ENCODE measurements at regions of chr5 and their contacts with region 1.

Region 1: DNA sequence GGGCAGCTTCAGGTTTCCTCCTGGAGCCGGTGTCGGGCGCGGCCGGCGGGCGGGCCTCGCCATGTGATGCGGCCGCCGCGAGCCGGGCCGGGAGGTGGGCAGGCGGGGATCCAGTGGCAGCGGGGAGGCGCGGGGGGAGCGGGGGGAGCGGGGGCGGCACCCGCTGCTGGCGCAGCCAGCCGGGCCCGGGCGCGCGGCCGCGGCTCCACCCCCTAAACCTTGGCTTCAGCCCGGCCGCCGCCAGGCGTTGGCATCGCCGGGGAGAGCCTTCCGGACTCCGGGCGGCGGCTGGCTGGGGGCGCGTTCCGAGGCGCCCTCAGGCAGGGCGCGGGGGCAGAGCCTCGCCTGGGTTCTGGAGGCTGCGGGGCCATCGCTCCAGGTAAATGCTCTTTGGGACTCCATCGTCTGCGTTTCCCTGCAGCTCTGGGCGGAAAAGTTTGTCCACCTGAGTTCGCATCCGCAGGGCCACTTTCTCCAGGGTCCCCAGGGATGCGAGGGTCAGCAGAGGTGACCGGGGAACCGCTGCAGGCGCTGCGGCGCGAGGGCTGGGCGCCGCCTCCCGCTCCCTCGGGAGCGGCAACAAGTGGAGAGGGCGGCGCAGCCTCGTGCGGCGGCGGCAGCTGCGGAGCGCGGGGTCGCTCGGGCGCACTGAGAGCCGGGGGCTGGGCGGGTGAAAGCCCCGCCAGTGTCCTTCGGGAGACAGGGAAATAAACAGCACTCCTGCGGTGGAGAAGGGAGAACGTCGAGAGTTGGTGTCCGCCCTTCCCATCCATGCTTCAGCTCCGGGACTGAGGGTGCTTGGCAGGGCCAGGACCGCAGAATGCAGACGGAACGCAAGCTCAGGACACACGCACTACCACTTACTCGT is at the start of gene ARHGEF28:
- DNase-seq: peak; percentile 49
- ATAC-seq: peak; percentile 78
- H3K4me3 ChIP-seq: peak within 1 kb of the TSS; percentile 79 to 90 (median 80)
- H3K27ac ChIP-seq: peak within 1 kb of the TSS; percentile 81
- H3K4me1 ChIP-seq: peaks cover 77% of the 10 kb centered on the region
- H3K27me3 ChIP-seq: no peaks in the 10 kb centered on the region; a peak in 1 of 5 replicates
- CTCF ChIP-seq: peak; percentile 23; the same call in 1 of the 2 replicates
- EP300 ChIP-seq: no peak
- POLR2A ChIP-seq: peak; percentile 54 to 75; a peak in 3 of 4 replicates
- RAD21 ChIP-seq: 0 out of 2 replicates have a peak, but pooled peaks have one; percentile 49
- total RNA-seq, gene ARHGEF28: 34.1 and 36.7 TPM in 2 replicates

Region 2: DNA sequence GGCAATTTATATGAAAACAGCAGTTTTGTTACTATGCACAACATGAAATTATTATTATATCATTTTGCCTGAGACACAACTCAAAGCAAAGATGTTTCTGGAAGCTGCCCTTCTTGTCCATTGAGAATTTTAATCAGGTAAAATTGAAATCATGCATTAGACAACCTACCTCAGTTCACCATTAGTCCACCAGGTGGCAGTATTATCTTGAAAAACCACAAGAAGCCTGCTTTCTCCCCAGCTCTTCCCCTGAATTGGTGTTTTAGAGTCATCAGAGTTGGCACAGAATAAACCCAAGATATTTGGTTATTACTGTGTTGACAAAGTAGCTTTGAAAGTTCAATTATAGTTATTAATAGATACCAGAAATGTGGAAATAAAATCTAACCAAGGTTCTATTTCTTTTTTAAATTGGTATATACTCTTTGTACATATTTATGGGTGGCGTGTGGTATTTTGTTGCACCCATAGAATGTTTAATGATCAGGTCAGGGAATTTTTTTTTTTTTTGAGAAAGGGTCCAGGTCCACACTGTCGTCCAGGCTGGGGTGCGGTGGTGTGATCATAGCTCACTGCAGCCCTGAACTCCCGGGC is 35.0 kb before region 1 on chr5:
- CTCF ChIA-PET with region 1: interaction called, 3 read pairs
- POLR2A ChIA-PET with region 1: interaction called, 11 read pairs
- in situ Hi-C with region 1: no loop called
- intact Hi-C with region 1: loop called (anchors 1 kb)
- DNase-seq: peak; percentile 79
- ATAC-seq: peak; percentile 77
- H3K4me3 ChIP-seq: no peak overlapping the region
- H3K27ac ChIP-seq: no peak overlapping the region
- H3K4me1 ChIP-seq: peaks cover 9% of the 10 kb centered on the region
- H3K27me3 ChIP-seq: no peaks in the 10 kb centered on the region; a peak in 1 of 5 replicates
- CTCF ChIP-seq: peak; percentile 78
- EP300 ChIP-seq: no peak
- POLR2A ChIP-seq: no peak
- RAD21 ChIP-seq: peak; percentile 81

Region 3: DNA sequence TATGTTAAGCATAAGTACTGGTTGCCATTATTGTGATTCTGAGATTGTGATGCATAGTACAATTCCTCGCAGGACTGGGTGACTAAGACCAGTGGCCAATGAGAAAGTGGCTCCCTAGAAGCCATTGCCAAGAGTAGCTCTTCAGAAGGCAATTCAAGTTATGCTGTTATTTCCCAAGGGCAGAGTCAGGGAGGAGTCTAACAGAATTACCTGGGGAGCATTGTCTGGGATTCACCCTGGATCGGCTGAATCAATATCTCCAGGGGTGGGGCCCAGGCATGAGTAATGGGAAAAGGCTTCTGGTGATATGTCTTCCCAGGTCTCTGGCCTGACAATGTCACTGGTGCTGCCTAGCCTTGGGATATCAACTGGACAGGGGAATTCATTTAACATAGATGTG is 11.1 kb before region 1 on chr5:
- CTCF ChIA-PET with region 1: no interaction called
- POLR2A ChIA-PET with region 1: interaction called, 12 read pairs
- in situ Hi-C with region 1: no loop called
- intact Hi-C with region 1: no loop called
- DNase-seq: no peak
- ATAC-seq: no peak
- H3K4me3 ChIP-seq: no peak overlapping the region
- H3K27ac ChIP-seq: no peak overlapping the region
- H3K4me1 ChIP-seq: peaks cover 26% of the 10 kb centered on the region
- H3K27me3 ChIP-seq: peaks cover 0 to 3% of the 10 kb centered on the region in 2 experiments; a peak in 1 of 5 replicates
- CTCF ChIP-seq: no peak
- EP300 ChIP-seq: no peak
- POLR2A ChIP-seq: no peak
- RAD21 ChIP-seq: no peak

Region 4: GRCh38 chr5:73663860-73664240 is 37.7 kb after region 1 on chr5:
- CTCF ChIA-PET with region 1: no interaction called
- POLR2A ChIA-PET with region 1: interaction called, 30 read pairs
- in situ Hi-C with region 1: no loop called
- intact Hi-C with region 1: loop called (anchors 5 kb)
- DNase-seq: peak; percentile 49
- ATAC-seq: peak; percentile 81
- H3K4me3 ChIP-seq: peak overlapping the region in 1 of 3 experiments; percentile 23; a peak in 3 of 6 replicates
- H3K27ac ChIP-seq: peak overlapping the region; percentile 65
- H3K4me1 ChIP-seq: peaks cover 53% of the 10 kb centered on the region
- H3K27me3 ChIP-seq: no peaks in the 10 kb centered on the region
- CTCF ChIP-seq: no peak
- EP300 ChIP-seq: no peak
- POLR2A ChIP-seq: no peak
- RAD21 ChIP-seq: no peak

Region 5: DNA sequence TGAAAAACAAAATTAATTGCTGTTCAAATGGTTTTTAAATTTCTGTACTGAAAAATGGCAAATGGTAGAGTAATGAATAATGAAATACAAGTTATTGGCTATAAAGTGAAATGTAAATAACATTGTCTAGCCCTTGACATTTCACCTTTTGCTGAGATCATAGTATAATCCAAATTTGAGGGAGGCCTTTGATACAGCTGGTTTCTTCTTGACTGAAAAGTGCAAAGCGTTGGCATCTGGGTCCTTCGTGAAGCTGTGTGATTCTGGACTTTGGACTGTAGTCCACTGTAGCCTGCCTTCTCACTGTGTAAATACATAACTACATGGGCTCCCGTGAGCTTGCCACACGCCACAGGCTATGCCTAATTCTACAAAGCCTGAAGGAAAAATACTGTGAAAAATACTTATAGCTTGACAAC is 52.2 kb after region 1 on chr5:
- CTCF ChIA-PET with region 1: no interaction called
- POLR2A ChIA-PET with region 1: interaction called, 21 read pairs
- in situ Hi-C with region 1: no loop called
- intact Hi-C with region 1: loop called (anchors 1 kb)
- DNase-seq: peak; percentile 95
- ATAC-seq: peak; percentile 98
- H3K4me3 ChIP-seq: peak overlapping the region in 2 of 3 experiments; percentile 32 to 33; a peak in 2 of 6 replicates
- H3K27ac ChIP-seq: peak overlapping the region; percentile 80
- H3K4me1 ChIP-seq: peaks cover 56% of the 10 kb centered on the region
- H3K27me3 ChIP-seq: no peaks in the 10 kb centered on the region
- CTCF ChIP-seq: no peak
- EP300 ChIP-seq: peak; percentile 71 to 72; a peak in 3 of 4 replicates
- POLR2A ChIP-seq: no peak
- RAD21 ChIP-seq: peak; percentile 35; the same call in 1 of the 2 replicates

Region 6: GRCh38 chr5:73729329-73729728 is 103.2 kb after region 1 on chr5:
- CTCF ChIA-PET with region 1: no interaction called
- POLR2A ChIA-PET with region 1: interaction called, 19 read pairs
- in situ Hi-C with region 1: no loop called
- intact Hi-C with region 1: no loop called
- DNase-seq: peak; percentile 93
- ATAC-seq: peak; percentile 98
- H3K4me3 ChIP-seq: no peak overlapping the region; a peak in 1 of 6 replicates
- H3K27ac ChIP-seq: peak overlapping the region; percentile 68
- H3K4me1 ChIP-seq: peaks cover 67% of the 10 kb centered on the region
- H3K27me3 ChIP-seq: no peaks in the 10 kb centered on the region
- CTCF ChIP-seq: peak; percentile 31; the same call in 1 of the 2 replicates
- EP300 ChIP-seq: peak in 1 of 2 experiments; percentile 91; a peak in 2 of 4 replicates
- POLR2A ChIP-seq: no peak
- RAD21 ChIP-seq: no peak

Measured in HepG2 (cell line).